Activated B cell treated with CpG ODN at 0.5 μM for 24 hours (primary cell): ENCODE measurements at regions of chr18 and their contacts with region 1.

Region 1: DNA sequence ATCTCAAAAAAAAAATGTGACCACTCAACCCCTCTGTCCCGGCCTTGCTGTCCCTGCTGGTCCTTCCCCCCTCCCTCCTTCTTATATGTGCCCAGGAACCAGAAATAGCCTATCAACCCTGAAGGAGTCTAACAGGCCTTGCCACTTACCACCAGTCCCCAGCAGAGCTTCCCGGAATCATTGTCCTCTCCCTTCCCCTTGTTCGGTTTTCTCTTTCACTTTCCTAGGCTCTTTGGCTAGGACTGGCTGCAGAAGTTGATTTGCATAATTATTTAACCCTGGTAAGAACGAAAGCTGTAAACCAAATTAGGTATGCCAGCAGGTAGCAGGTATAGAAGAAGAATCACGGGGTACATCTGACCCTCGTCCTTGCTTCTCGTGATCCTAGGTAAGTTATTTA is 72.6 kb upstream of the ZNF532 start:
- DNase-seq: no peak
- ATAC-seq: peak; percentile 84
- H3K4me3 Mint-ChIP-seq: peak overlapping the region; percentile 73
- H3K27ac Mint-ChIP-seq: peak overlapping the region; percentile 79
- H3K4me1 Mint-ChIP-seq: peaks cover 8% of the 10 kb centered on the region
- H3K27me3 Mint-ChIP-seq: no peaks in the 10 kb centered on the region
- CTCF ChIP-seq: no peak

Region 2: DNA sequence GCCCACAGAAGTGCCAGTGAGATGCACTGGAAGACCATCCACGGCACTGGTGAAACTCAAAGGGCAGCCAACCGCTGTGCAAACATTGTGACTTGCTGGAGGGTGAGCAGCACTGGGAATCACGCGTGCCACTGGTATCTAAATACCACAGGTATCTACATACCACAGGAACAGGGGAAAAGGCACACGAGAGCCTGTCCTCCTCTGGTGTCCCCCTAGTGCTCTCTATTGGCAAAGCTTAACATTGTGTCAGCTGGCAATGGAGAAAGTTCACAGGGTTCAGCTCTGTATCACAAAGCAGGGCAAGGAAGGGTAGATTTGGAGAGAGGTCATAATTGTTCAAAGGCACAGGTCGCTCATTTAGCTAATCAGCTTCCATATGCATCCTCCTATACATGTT is 335.0 kb after region 1 on chr18:
- CTCF ChIA-PET with region 1: no interaction called
- POLR2A ChIA-PET with region 1: no interaction called
- intact Hi-C with region 1: loop called (anchors 5 kb)
- DNase-seq: no peak
- ATAC-seq: no peak
- H3K4me3 Mint-ChIP-seq: no peak overlapping the region
- H3K27ac Mint-ChIP-seq: no peak overlapping the region
- H3K4me1 Mint-ChIP-seq: no peaks in the 10 kb centered on the region
- H3K27me3 Mint-ChIP-seq: peaks cover 21% of the 10 kb centered on the region
- CTCF ChIP-seq: no peak